Activated CD4-positive, alpha-beta memory T cell treated with anti-CD3 and anti-CD28 coated beads for 36 hours (primary cell): ENCODE measurements at regions of chr1 and their contacts with region 1.

Region 1: DNA sequence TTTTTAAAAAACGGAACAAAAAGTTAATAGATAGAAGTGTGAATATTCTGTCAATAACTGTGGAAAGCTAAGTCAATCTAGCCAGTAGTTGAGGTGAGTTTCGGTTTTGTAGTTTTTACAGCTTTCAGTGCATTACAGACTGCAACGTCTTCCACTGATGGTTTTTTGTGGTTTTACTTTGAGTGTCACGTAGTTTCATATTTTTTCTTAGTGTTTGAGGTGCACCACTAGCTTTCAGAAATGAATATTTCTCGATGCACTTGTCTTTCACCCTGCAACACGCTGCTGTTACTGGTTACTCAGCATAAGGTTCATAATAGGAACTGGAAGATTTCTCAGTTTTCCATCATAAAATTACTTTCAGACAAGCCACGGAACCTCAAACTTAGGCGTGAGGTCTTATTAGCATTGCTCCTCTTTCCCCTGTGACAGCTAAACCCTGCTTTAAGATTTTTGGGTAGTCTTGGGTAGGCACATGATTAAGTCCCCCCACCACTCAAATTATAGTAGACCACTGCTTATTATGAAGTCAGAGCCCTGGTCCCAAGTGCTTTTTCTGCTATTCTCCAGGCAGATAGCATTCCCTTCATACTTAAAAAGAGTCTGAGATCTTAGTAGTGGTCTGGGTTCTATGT is 1412.7 kb downstream of the KCNT2 start:
- DNase-seq: peak; percentile 31
- H3K4me3 Mint-ChIP-seq: peak overlapping the region; percentile 31
- H3K27ac Mint-ChIP-seq: peak overlapping the region; percentile 20
- H3K4me1 Mint-ChIP-seq: peaks cover 28% of the 10 kb centered on the region
- H3K27me3 Mint-ChIP-seq: peaks cover 33% of the 10 kb centered on the region

Region 2: GRCh38 chr1:194289569-194290266 is 905.8 kb before region 1 on chr1:
- CTCF ChIA-PET with region 1: no interaction called
- POLR2A ChIA-PET with region 1: no interaction called
- intact Hi-C with region 1: loop called (anchors 5 kb)
- DNase-seq: peak; percentile 64
- H3K4me3 Mint-ChIP-seq: peak overlapping the region; percentile 43
- H3K27ac Mint-ChIP-seq: no peak overlapping the region
- H3K4me1 Mint-ChIP-seq: peaks cover 33% of the 10 kb centered on the region
- H3K27me3 Mint-ChIP-seq: no peaks in the 10 kb centered on the region

Region 3: DNA sequence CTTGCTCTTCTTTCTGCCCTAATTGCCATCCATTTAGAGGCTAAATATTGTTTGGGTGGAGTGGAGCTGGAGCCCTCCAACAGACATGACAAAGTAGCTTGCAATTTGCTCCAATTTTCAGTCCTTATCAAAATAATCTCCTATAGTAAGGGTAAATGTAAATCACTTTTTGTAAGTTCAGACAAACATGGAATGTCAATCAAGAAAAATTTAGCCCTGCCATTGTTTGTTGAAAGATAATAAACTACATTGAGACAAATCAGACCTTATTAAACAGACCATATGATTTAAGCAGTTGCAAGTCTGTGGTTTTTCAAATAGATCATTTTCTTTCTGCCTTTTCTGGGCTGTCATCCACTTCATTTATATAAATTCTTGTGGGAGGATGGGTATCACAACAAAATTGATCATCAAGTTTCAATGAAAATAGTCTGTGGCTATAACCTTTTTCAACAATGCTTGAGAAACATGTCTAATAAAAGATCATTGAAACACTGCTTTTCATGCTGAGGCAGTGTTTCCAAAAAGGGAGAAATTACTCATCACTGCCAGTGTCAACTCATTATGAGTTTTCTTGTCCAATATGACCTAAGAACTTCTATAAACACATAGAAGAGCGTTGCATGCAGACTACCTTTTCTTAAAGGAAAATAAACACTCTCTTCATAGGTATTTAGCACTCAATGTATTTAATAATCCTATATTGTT is 857.1 kb before region 1 on chr1:
- CTCF ChIA-PET with region 1: no interaction called
- POLR2A ChIA-PET with region 1: no interaction called
- intact Hi-C with region 1: loop called (anchors 1 kb)
- DNase-seq: no peak
- H3K4me3 Mint-ChIP-seq: no peak overlapping the region
- H3K27ac Mint-ChIP-seq: no peak overlapping the region
- H3K4me1 Mint-ChIP-seq: peaks cover 10% of the 10 kb centered on the region
- H3K27me3 Mint-ChIP-seq: no peaks in the 10 kb centered on the region

Region 4: GRCh38 chr1:195462646-195463045 is 267.1 kb after region 1 on chr1:
- CTCF ChIA-PET with region 1: no interaction called
- POLR2A ChIA-PET with region 1: no interaction called
- intact Hi-C with region 1: no loop called
- DNase-seq: no peak
- H3K4me3 Mint-ChIP-seq: no peak overlapping the region
- H3K27ac Mint-ChIP-seq: no peak overlapping the region
- H3K4me1 Mint-ChIP-seq: no peaks in the 10 kb centered on the region
- H3K27me3 Mint-ChIP-seq: no peaks in the 10 kb centered on the region